AG04450 (cell line): ENCODE measurements at regions of chr1 and their contacts with region 1.

Region 1: DNA sequence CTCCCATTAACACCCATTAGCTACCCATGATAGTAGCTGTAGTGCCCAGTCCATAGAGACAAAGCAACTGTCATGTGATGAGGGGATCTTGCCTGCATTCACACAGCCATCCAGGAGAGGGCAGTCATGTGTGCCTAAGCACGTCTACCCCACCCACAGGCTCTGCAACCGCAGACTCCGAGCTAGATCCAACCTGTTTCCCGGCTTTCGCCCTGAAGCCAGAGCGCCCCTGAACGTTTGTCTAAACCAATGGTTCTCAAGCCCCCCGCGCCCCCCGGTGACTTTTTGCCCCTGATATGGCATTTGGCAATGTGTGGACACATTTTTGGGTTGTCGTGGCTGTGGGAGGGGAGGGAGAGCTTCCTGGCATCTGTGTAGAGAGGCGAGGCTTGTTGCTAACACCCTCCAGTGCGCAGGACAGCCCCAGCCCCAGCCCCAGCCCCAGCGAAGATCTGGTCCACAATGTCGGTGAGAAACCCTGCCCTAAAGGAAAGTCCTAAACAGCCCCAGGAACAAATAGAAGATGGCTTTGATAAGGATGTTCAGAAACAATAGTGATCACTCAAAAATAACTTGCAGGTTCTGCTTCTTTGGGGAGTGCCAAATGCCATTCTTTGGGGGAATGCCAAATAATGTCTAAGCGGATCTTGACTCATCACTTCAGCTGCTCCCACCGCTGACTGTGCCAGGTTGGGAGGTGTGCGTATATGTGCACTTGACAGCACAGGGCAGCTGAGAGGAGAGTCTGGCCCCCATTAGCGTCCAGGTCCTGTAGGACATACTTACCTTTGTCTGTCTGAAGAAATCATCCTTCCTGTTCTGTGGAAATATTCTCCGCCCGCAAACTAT is 34.5 kb downstream of the SLC44A3 start:
- DNase-seq: peak; percentile 83
- H3K4me3 ChIP-seq: peak overlapping the region; percentile 58
- H3K27ac ChIP-seq: peak overlapping the region; percentile 69
- H3K27me3 ChIP-seq: no peaks in the 10 kb centered on the region
- CTCF ChIP-seq: peak; percentile 96

Region 2: GRCh38 chr1:94413311-94413710 is 441.4 kb before region 1 on chr1:
- CTCF ChIA-PET with region 1: no interaction called
- POLR2A ChIA-PET with region 1: no interaction called
- DNase-seq: no peak
- H3K4me3 ChIP-seq: no peak overlapping the region
- H3K27ac ChIP-seq: no peak overlapping the region
- H3K27me3 ChIP-seq: no peaks in the 10 kb centered on the region
- CTCF ChIP-seq: no peak

Region 3: DNA sequence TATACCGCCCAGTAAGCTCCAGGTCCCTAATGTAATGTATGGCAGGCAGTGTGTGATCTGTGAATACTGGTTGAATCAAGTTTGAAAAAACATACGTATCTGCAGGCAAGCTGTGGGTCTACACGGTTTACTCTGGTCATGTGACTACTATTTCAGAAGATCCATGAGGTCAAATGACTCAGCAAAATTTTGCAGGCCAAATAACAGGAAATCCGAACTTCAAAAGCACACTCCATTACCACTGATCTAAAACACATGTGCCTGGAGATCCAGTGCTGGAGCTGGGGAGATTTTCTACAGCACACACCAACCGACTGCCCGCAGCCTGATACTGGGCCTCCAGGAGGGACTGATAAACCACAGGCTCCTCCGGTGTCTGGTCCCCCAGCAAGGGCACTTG is 99.0 kb before region 1 on chr1:
- CTCF ChIA-PET with region 1: no interaction called
- POLR2A ChIA-PET with region 1: no interaction called
- DNase-seq: peak; percentile 96
- H3K4me3 ChIP-seq: no peak overlapping the region
- H3K27ac ChIP-seq: peak overlapping the region; percentile 90
- H3K27me3 ChIP-seq: no peaks in the 10 kb centered on the region
- CTCF ChIP-seq: no peak

Region 4: DNA sequence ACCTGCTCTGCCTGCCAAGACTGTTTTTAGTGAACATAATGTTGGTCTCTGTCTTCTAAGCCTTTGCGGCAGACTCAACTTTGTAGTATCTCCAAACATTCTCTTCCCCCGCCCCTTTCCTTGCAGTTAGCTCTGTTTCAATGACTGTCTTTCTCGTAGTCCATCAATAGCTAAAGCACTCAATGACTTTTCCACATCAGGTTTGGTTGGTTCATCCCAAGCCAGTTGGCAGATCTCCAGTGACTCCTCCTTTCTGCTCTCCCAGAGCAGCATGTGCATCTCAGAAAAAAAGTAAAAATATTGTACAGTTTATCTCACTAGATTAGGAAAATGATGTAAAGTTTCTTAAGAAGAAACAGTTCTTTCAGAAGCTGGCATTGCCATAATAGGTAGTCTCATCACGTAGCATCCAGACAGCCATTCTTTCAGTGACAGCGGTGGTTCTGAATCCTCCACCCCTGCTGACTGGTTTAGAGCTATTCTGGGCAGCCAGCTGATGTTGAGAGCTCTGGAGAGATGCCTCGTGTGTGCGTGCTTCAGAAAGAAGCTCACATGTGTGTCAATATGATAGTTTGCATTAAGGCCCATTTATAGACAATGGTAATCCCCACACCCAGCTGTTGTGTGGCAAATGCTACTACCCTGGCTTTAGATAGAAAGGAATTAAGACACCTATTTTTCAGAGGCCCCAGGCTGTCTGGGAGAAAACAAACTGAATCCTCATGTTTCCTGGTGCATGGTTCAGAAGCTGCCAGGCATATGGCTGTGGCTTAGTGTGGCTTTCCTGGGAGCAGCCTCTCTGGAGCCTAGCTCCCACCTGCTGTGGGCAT is 19.1 kb after region 1 on chr1:
- CTCF ChIA-PET with region 1: interaction called, 22 read pairs
- POLR2A ChIA-PET with region 1: interaction called, 3 read pairs
- DNase-seq: no peak
- H3K4me3 ChIP-seq: no peak overlapping the region
- H3K27ac ChIP-seq: no peak overlapping the region
- H3K27me3 ChIP-seq: no peaks in the 10 kb centered on the region
- CTCF ChIP-seq: no peak

Region 5: DNA sequence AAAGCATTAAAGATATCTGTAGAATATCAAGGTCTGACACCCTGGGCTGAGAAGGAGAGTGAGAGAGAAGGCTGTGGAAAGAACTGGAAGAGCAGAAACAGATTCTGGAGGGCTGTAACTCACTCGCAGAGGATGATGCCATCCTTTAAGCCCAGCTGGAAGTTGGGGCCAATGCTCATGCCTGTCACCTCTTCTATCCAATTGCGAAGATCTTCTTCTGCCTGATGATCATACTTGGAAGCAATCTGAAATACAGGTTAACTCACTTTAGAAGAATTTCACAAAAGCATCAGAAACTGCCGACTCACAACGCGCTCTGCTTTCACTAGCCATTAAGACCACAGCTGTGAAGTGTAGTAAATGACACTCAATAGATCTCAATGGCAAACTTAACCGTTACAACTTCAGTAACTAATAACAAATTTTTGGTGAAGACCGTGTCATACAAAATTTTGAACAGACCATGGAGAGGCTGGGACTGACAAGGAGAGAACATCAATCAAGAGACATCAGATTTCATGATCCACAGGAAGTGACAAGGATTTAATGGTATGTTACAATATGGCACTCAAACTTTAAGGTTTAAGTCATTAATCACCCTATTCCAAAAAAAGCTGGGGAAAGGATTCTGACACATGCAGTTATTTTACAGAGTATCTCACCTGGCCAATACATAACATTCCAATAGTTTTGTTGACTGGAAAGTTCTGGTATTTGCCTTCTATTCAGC is 48.8 kb after region 1 on chr1:
- CTCF ChIA-PET with region 1: interaction called, 12 read pairs
- POLR2A ChIA-PET with region 1: interaction called, 4 read pairs
- DNase-seq: no peak
- H3K4me3 ChIP-seq: no peak overlapping the region
- H3K27ac ChIP-seq: no peak overlapping the region
- H3K27me3 ChIP-seq: no peaks in the 10 kb centered on the region
- CTCF ChIP-seq: no peak

Region 6: DNA sequence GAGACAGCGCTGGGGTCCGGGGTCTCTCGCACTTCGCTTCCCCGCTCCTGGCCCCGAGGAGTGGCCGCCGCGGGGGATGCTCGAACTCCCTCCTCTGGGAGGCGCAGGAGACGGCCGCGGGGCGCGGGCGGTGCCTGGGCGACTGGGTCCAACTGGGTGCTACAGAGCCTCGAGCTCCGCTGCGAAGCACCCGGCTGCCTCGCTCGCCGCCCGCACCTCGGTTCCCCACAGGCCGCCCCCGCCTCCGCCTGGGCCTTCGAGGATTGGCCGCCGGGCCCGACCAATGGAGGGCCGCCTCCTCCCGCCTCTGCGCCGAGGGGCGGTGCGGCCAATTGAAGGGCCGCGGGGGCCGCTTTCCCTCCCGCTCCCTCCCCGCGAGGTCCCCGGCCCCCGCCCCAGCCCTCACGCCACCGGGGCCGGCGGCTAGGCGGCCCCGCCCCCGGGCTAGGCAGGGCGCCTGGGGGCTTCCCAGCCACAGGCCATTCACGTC is 72.3 kb after region 1 on chr1 and contains the start of gene CNN3:
- CTCF ChIA-PET with region 1: interaction called, 19 read pairs
- POLR2A ChIA-PET with region 1: interaction called, 5 read pairs
- DNase-seq: peak; percentile 83
- H3K4me3 ChIP-seq: peak within 1 kb of the TSS; percentile 87
- H3K27ac ChIP-seq: peak within 1 kb of the TSS; percentile 97
- H3K27me3 ChIP-seq: no peaks in the 10 kb centered on the region
- CTCF ChIP-seq: no peak
- polyA plus RNA-seq, gene CNN3: 374 and 438 TPM in 2 replicates

Region 7: GRCh38 chr1:95035536-95035935 is 180.9 kb after region 1 on chr1:
- CTCF ChIA-PET with region 1: interaction called, 266 read pairs
- POLR2A ChIA-PET with region 1: no interaction called
- DNase-seq: peak; percentile 84
- H3K4me3 ChIP-seq: no peak overlapping the region
- H3K27ac ChIP-seq: peak overlapping the region; percentile 58
- H3K27me3 ChIP-seq: no peaks in the 10 kb centered on the region
- CTCF ChIP-seq: no peak